Activated T-helper 1 cell treated with anti-CD3 and anti-CD28 coated beads, Interleukin-12 subunit alpha, Interleukin-12 subunit beta, Interleukin-2, Interleukin-4 antibody, amounts not matched to agents 30 ng/mL and 10 ng/mL and 1 ng/mL, durations not matched to agents 14 hours and 24 hours and 36 hours (primary cell): ENCODE measurements at regions of chr12 and their contacts with region 1.

Region 1: DNA sequence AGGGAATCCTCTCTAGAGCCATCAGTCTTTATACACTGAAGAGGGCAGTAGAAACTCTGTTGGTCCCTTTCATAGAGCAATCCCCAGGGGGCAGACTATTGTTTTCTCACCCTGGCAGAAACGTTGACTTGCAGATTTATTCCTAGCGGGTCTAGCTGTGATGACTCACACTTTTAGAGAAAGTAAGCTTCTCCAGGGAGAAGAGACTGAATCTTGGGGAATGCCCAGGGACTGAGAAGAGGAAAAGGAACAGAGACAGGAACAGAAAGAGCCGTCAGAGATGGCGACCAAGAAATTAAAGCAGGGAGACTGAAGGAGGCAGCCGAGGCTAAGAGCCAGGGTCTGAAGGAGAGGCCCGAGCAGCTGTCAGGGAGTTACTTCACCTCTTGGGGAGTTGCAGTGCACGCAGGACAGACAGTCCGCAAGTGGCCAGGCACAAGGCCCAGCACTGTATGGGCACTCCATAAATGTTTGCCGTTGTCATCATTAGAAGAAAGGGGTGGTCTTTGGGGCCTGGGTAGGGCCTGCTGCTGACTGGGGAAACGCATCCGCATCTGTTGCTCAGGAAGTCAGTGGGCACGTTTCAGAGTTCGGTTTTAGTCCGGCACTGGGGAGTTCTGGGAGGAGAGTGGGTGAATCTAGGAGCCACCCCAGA is 13.0 kb downstream of the PLEKHG6 start:
- DNase-seq: no peak
- H3K4me3 Mint-ChIP-seq: peak overlapping the region; percentile 71
- H3K27ac Mint-ChIP-seq: peak overlapping the region; percentile 90
- H3K4me1 Mint-ChIP-seq: peaks cover 31% of the 10 kb centered on the region
- H3K27me3 Mint-ChIP-seq: no peaks in the 10 kb centered on the region

Region 2: GRCh38 chr12:6140651-6141447 is 182.6 kb before region 1 on chr12:
- intact Hi-C with region 1: no loop called
- DNase-seq: no peak
- H3K4me3 Mint-ChIP-seq: peak overlapping the region; percentile 48
- H3K27ac Mint-ChIP-seq: peak overlapping the region; percentile 93
- H3K4me1 Mint-ChIP-seq: peaks cover 38% of the 10 kb centered on the region
- H3K27me3 Mint-ChIP-seq: no peaks in the 10 kb centered on the region

Region 3: GRCh38 chr12:6167327-6168259 is 155.9 kb before region 1 on chr12:
- intact Hi-C with region 1: no loop called
- DNase-seq: peak; percentile 35
- H3K4me3 Mint-ChIP-seq: peak overlapping the region; percentile 6
- H3K27ac Mint-ChIP-seq: peak overlapping the region; percentile 87
- H3K4me1 Mint-ChIP-seq: peaks cover 28% of the 10 kb centered on the region
- H3K27me3 Mint-ChIP-seq: no peaks in the 10 kb centered on the region

Region 4: DNA sequence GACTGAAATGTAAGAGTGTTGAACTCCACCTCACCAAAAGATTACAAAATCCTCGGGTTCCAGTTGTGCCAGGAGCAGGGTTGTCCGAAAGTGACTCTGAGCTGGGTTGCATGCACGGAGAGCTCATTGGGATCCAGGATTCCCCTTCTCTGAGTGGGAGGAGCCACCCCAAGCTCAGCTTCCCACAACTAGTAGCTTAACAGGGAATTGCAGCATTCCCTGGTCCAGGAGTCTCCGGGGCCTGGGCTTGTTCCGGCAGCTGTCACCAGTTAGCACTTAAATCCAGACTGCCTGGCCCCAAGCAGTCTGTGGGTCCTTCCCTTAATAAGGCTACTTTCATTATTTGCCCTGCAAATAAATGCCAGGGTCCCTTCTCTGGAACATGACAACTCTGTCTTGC is 73.1 kb before region 1 on chr12:
- intact Hi-C with region 1: no loop called
- DNase-seq: no peak
- H3K4me3 Mint-ChIP-seq: no peak overlapping the region
- H3K27ac Mint-ChIP-seq: no peak overlapping the region
- H3K4me1 Mint-ChIP-seq: no peaks in the 10 kb centered on the region
- H3K27me3 Mint-ChIP-seq: peaks cover 5% of the 10 kb centered on the region

Region 5: GRCh38 chr12:6367065-6367968 is 43.9 kb after region 1 on chr12:
- intact Hi-C with region 1: loop called (anchors 1 kb)
- DNase-seq: no peak
- H3K4me3 Mint-ChIP-seq: no peak overlapping the region
- H3K27ac Mint-ChIP-seq: peak overlapping the region; percentile 3
- H3K4me1 Mint-ChIP-seq: peaks cover 20% of the 10 kb centered on the region
- H3K27me3 Mint-ChIP-seq: no peaks in the 10 kb centered on the region